Activated B cell treated with CpG ODN at 0.5 μM for 24 hours (primary cell): ENCODE measurements at regions of chr7 and their contacts with region 1.

Region 1: GRCh38 chr7:44633254-44634186 is 27.1 kb downstream of the OGDH start:
- DNase-seq: peak; percentile 32
- ATAC-seq: peak; percentile 67
- H3K4me3 Mint-ChIP-seq: peak overlapping the region; percentile 61
- H3K27ac Mint-ChIP-seq: peak overlapping the region; percentile 96
- H3K4me1 Mint-ChIP-seq: peaks cover 96% of the 10 kb centered on the region
- H3K27me3 Mint-ChIP-seq: no peaks in the 10 kb centered on the region
- CTCF ChIP-seq: no peak

Region 2: GRCh38 chr7:44103923-44104859 is 529.3 kb before region 1 on chr7 and contains the start of gene AEBP1:
- CTCF ChIA-PET with region 1: no interaction called
- POLR2A ChIA-PET with region 1: interaction called, 10 read pairs
- intact Hi-C with region 1: no loop called
- DNase-seq: no peak
- ATAC-seq: peak; percentile 66
- H3K4me3 Mint-ChIP-seq: peak within 1 kb of the TSS; percentile 81
- H3K27ac Mint-ChIP-seq: peak within 1 kb of the TSS; percentile 72
- H3K4me1 Mint-ChIP-seq: peaks cover 57% of the 10 kb centered on the region
- H3K27me3 Mint-ChIP-seq: peaks cover 2% of the 10 kb centered on the region
- CTCF ChIP-seq: no peak
- total RNA-seq, gene AEBP1: 17.4 and 21.7 TPM in 2 replicates

Region 3: DNA sequence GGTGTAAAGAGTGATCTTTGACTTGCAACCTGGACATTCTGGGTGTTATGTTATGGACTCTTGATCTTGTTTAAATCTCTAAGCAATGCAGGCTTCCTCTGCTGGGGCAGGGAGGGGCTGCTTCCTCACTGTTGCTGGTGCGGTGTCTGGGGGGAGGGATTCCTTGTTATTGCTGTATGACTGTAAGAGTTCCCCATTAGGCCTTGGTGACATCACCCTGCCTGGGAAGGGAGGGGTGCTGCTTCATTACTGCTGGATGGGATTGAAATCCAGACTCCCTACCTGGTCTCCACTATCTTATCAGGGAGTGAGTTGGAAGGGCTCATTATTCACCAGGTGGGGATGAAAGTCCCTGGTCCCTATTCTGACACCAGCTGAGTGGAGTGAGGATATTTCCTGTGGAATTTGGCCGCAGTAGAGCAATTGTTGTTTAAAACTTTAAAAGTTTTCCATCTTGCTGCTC is 18.3 kb before region 1 on chr7:
- CTCF ChIA-PET with region 1: interaction called, 3 read pairs
- POLR2A ChIA-PET with region 1: interaction called, 257 read pairs
- intact Hi-C with region 1: loop called (anchors 1 kb)
- DNase-seq: no peak
- ATAC-seq: peak; percentile 80
- H3K4me3 Mint-ChIP-seq: peak overlapping the region; percentile 52
- H3K27ac Mint-ChIP-seq: peak overlapping the region; percentile 26
- H3K4me1 Mint-ChIP-seq: peaks cover 56% of the 10 kb centered on the region
- H3K27me3 Mint-ChIP-seq: no peaks in the 10 kb centered on the region
- CTCF ChIP-seq: no peak